Natural killer cell (primary cell): ENCODE measurements at regions of chr2 and their contacts with region 1.

Region 1: GRCh38 chr2:202870431-202871299 is 901 bp downstream of the ICA1L start:
- DNase-seq: peak; percentile 50 to 76
- ATAC-seq: peak; percentile 82 to 89 (median 86)
- H3K4me3 ChIP-seq: peak overlapping the region; percentile 83
- H3K4me3 Mint-ChIP-seq: peak overlapping the region; percentile 91
- H3K27ac ChIP-seq: peak overlapping the region; percentile 74
- H3K27ac Mint-ChIP-seq: peak overlapping the region; percentile 73 to 82
- H3K4me1 ChIP-seq: peaks cover 7% of the 10 kb centered on the region
- H3K4me1 Mint-ChIP-seq: peaks cover 8 to 13% of the 10 kb centered on the region in 2 donors
- H3K27me3 ChIP-seq: no peaks in the 10 kb centered on the region
- H3K27me3 Mint-ChIP-seq: no peaks in the 10 kb centered on the region
- CTCF ChIP-seq: peak; percentile 64

Region 2: DNA sequence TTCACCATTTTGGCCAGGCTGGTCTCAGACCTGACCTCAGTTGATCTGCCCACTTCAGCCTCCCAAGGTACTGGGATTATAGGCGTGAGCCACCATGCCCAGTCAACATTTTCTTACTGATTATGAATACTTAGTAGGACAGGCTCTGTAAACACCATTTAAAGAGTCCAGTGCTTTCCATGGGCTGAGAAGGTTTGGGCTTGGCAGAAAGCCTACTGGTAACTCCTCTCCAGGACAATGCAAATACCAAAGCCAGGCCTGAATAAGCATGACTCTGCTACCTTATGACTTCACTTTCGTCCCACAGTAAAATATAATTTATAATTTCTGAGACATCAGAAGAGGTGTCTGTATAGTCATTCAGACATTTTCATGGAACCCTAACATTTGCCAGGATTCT is 296.1 kb before region 1 on chr2:
- intact Hi-C with region 1: loop called (anchors 5 kb)
- DNase-seq: no peak
- ATAC-seq: no peak
- H3K4me3 ChIP-seq: no peak overlapping the region
- H3K4me3 Mint-ChIP-seq: no peak overlapping the region
- H3K27ac ChIP-seq: no peak overlapping the region
- H3K27ac Mint-ChIP-seq: no peak overlapping the region
- H3K4me1 ChIP-seq: no peaks in the 10 kb centered on the region
- H3K4me1 Mint-ChIP-seq: no peaks in the 10 kb centered on the region
- H3K27me3 ChIP-seq: no peaks in the 10 kb centered on the region
- H3K27me3 Mint-ChIP-seq: peaks cover 0 to 3% of the 10 kb centered on the region in 2 donors
- CTCF ChIP-seq: no peak

Region 3: GRCh38 chr2:202588647-202589581 is 281.8 kb before region 1 on chr2:
- intact Hi-C with region 1: loop called (anchors 1 kb)
- DNase-seq: peak; percentile 52 to 88
- ATAC-seq: peak; percentile 88 to 100 (median 99)
- H3K4me3 ChIP-seq: no peak overlapping the region
- H3K4me3 Mint-ChIP-seq: no peak overlapping the region
- H3K27ac ChIP-seq: no peak overlapping the region
- H3K27ac Mint-ChIP-seq: no peak overlapping the region
- H3K4me1 ChIP-seq: peaks cover 6% of the 10 kb centered on the region
- H3K4me1 Mint-ChIP-seq: peaks cover 7% of the 10 kb centered on the region in 2 donors
- H3K27me3 ChIP-seq: no peaks in the 10 kb centered on the region
- H3K27me3 Mint-ChIP-seq: peaks cover 6 to 8% of the 10 kb centered on the region in 2 donors
- CTCF ChIP-seq: peak; percentile 78

Region 4: GRCh38 chr2:202831242-202832220 is 39.1 kb before region 1 on chr2:
- intact Hi-C with region 1: loop called (anchors 5 kb)
- DNase-seq: peak; percentile 19 to 72
- ATAC-seq: peak; percentile 71 to 94 (median 93)
- H3K4me3 ChIP-seq: no peak overlapping the region
- H3K4me3 Mint-ChIP-seq: peak overlapping the region; percentile 32
- H3K27ac ChIP-seq: no peak overlapping the region
- H3K27ac Mint-ChIP-seq: peak overlapping the region in 1 of 2 donors; percentile 52
- H3K4me1 ChIP-seq: peaks cover 5% of the 10 kb centered on the region
- H3K4me1 Mint-ChIP-seq: peaks cover 9 to 10% of the 10 kb centered on the region in 2 donors
- H3K27me3 ChIP-seq: no peaks in the 10 kb centered on the region
- H3K27me3 Mint-ChIP-seq: peaks cover 0 to 9% of the 10 kb centered on the region in 2 donors
- CTCF ChIP-seq: peak; percentile 43

Region 5: GRCh38 chr2:203014456-203015199 is 144.0 kb after region 1 on chr2 and contains the start of gene NBEAL1:
- intact Hi-C with region 1: loop called (anchors 1 kb)
- DNase-seq: peak; percentile 98 to 99
- ATAC-seq: peak; percentile 91 to 96 (median 92)
- H3K4me3 ChIP-seq: peak within 1 kb of the TSS; percentile 84
- H3K4me3 Mint-ChIP-seq: peak within 1 kb of the TSS; percentile 98
- H3K27ac ChIP-seq: peak within 1 kb of the TSS; percentile 90
- H3K27ac Mint-ChIP-seq: peak within 1 kb of the TSS; percentile 97 to 99
- H3K4me1 ChIP-seq: peaks cover 13% of the 10 kb centered on the region
- H3K4me1 Mint-ChIP-seq: peaks cover 29 to 35% of the 10 kb centered on the region in 2 donors
- H3K27me3 ChIP-seq: peaks cover 2% of the 10 kb centered on the region
- H3K27me3 Mint-ChIP-seq: peaks cover 0 to 13% of the 10 kb centered on the region in 2 donors
- CTCF ChIP-seq: no peak
- total RNA-seq, gene NBEAL1: 12.2 to 19.7 (median 12.9) TPM